ENCODE measurements at regions of chr3 and their contacts with region 1.

Region 1: DNA sequence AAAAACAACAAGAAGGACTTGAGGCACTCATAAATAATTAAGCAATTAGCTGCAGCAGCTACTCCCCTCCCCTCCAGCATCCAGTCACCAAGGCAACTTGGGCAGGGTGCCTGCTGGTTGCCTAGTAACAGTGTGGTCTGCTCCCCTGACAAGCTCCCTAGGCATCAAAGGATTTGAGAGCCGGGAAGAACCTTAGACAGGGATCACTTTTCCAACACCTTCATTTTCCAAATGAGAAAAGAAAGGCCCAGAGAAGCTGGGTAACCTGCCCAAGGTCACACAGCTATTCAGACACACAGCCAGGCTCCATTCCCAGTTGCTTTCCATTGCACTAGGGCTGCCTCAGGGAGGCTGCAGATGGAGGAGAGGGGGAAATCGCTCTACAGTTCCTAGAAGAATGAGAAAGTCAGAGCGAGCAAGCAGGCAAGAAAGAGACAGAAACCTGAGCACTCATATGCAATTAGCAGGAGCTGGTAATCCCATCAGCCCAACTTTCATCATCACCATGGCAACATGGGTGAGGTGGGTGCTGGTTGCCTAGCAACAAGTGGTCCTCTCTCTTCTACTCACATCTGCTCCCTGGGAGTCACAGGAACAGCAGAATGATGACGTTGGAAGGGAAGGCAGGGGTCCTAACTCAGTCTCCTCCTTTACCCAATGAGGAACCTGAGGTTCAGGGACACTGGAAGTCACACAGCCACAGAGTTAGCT is 3.6 kb upstream of the EIF4E3 start:
- H3K4me3 ChIP-seq: no peak overlapping the region
- H3K27ac ChIP-seq: no peak overlapping the region
- H3K4me1 ChIP-seq: no peaks in the 10 kb centered on the region
- CTCF ChIP-seq: no peak

Region 2: DNA sequence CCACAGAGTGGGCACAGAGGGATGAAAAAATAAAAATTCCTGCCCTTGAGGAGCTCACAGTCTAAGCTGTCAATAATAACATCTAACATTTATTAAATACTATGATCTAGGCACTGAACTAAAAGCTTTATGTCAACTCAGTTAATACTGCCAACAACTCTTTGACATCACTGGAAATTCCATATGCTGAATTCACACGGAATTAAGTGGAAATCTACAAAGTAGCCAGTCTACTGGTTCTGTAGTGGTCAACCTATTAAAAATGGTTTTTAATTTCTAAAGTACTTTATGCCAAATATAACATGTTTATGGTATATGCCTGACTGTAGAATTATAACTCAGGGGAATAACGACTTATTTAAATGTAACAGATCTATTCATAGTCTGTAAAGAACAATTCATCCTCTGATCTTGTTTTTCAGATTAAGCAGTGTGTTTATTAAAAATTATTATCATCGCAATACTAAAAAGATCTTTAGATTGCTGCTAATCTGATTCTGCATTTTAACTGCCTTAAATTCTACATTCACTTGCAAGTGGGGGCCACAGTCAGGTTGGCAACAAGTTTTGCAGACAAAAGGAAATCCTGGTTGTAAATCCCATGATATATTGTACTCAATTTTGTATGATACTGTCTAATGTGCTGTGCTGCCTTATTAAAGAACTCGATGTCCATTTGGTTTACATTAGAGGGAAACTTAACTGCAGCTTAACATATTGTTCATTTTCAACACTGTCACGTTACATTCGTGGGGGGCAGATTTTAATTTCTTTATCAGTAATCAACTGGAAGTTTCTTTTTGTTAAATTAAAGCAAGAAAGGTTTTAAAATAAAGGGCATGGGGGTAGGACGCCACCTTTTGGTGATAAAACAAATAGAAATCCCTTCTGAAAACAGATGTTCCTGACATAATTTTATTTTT is 142.6 kb before region 1 on chr3:
- CTCF ChIA-PET with region 1: no interaction called
- POLR2A ChIA-PET with region 1: no interaction called
- H3K4me3 ChIP-seq: no peak overlapping the region
- H3K27ac ChIP-seq: no peak overlapping the region
- H3K4me1 ChIP-seq: peaks cover 9% of the 10 kb centered on the region; the same call in 1 of the 2 replicates
- CTCF ChIP-seq: no peak

Region 3: DNA sequence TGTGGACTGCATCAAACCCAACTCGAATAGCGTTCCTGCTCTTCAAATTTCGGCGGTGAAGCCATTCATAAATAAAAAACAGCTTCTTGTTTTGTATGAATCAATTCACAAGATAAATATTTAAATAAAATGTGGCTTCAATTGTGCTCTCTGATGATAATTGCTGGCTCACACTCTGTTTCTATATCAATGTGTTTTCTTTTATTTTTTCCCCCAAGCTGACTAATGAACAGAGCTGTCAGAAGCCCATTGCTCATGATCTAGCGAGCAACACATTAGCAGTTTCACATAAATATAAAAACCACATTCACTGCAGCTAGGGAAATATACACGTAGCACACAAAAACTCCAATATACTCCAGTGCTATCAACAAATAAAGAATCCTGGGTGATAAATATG is 100.3 kb before region 1 on chr3:
- CTCF ChIA-PET with region 1: no interaction called
- POLR2A ChIA-PET with region 1: no interaction called
- H3K4me3 ChIP-seq: no peak overlapping the region
- H3K27ac ChIP-seq: no peak overlapping the region
- H3K4me1 ChIP-seq: no peaks in the 10 kb centered on the region
- CTCF ChIP-seq: no peak

Region 4: DNA sequence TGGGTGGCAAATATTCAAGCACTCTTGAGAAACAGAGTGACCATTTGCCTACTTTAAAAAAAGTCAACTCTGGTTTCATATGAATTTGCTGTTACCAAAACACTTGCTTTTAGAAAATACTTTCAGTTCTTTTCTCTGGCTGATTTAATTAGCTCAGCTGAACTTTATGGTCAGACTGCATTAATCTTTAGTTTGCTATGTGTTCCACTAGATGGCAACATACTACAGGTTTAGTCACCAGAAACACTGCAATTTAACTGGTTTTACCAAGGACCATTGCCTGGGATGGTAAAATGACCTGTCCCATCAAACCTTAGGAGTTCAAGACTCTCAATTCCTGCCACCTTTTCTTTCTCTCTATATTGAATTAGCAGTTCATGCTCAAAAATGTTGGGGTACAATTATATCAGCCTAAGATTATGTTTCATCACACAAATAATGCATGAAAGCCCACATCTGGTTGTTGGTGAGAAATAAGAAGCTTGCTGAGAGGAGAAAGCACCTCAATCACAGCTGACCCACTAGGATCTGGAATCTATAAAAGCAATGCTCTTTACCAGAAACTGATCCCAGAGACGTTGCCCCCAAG is 17.8 kb before region 1 on chr3:
- CTCF ChIA-PET with region 1: interaction called, 11 read pairs
- POLR2A ChIA-PET with region 1: no interaction called
- H3K4me3 ChIP-seq: no peak overlapping the region
- H3K27ac ChIP-seq: no peak overlapping the region
- H3K4me1 ChIP-seq: no peaks in the 10 kb centered on the region
- CTCF ChIP-seq: no peak

Region 5: GRCh38 chr3:71875461-71875947 is 146.7 kb after region 1 on chr3:
- CTCF ChIA-PET with region 1: interaction called, 11 read pairs
- POLR2A ChIA-PET with region 1: no interaction called
- H3K4me3 ChIP-seq: no peak overlapping the region
- H3K27ac ChIP-seq: no peak overlapping the region
- H3K4me1 ChIP-seq: peaks cover 9% of the 10 kb centered on the region; the same call in 1 of the 2 replicates
- CTCF ChIP-seq: peak; percentile 63

Measured in HEK293 (cell line).